Activated B cell treated with CpG ODN at 0.5 μM for 24 hours (primary cell): ENCODE measurements at regions of chr18 and their contacts with region 1.

Region 1: DNA sequence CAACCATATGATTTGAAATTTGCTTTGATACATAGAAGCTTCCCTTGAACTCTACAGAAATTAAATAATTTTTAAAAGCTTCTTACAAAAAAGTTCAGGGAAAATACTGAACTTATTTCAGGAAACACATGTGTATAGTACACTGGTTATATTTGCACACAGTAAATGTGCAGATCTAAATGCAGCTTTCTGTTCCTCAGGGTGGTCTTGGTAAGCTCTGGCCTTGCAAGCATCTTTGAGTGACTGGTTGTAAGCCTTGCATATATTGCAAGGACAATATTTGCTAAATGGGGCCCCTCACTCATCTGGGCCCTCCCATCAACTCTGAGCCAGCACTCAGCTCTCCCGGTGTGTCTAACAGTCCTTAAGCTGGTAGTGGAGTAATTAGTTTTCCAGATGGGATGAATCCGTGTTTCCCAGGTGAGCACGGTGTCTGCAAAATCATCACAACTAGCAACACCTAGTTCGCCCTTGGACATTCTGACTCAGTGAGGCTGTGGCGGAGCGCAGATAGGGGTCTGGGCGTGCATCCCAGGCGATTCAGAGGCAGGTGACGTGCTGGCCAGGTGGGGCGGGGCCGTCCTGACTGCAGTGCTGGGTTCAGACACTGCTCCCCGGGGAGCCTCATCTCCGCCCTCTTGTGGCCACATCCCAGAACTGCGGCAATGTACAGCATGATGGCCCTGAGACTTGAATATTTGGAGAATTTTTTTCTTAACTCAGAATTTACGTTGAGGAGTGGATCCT is 149.6 kb downstream of the MBP start:
- DNase-seq: peak; percentile 80
- ATAC-seq: peak; percentile 79
- H3K4me3 Mint-ChIP-seq: peak overlapping the region; percentile 35
- H3K27ac Mint-ChIP-seq: peak overlapping the region; percentile 69
- H3K4me1 Mint-ChIP-seq: peaks cover 56% of the 10 kb centered on the region
- H3K27me3 Mint-ChIP-seq: no peaks in the 10 kb centered on the region
- CTCF ChIP-seq: no peak

Region 2: DNA sequence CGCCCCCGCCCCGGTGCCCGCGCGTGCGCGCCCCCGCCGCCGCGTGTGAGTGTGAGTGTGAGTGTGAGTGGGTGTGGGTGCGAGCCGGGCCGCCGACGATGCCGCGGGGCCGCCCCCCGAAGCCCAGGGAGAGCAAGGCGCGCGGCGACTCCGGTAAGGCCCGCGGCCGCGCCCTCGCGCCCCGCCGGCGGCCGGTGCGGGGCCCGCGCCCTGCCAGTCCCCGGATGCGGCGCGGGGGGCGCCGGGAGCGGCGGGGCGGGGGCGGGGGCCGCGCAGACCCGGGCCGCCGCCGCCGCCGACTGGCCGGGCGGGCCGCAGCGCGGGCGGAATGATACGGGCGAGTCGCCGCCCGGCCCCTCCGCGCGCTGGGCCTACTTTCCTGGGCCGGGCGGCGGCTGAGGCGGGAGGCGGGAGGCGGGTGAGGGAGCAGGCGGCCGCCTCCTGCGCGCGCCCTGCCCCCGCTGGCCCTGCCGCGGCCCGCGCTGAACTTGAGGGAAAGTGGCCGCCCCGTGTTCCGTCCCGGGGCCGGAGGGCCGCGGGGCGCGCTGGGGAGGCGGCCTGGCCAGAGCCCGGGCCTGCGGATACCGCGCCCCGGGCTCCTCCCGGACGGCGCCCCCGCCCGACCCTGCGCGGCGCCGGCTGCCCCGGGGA is 160.4 kb before region 1 on chr18 and contains the start of gene ZNF236:
- CTCF ChIA-PET with region 1: no interaction called
- POLR2A ChIA-PET with region 1: interaction called, 4 read pairs
- intact Hi-C with region 1: loop called (anchors 2 kb)
- DNase-seq: peak; percentile 79
- ATAC-seq: peak; percentile 58
- H3K4me3 Mint-ChIP-seq: peak within 1 kb of the TSS; percentile 95
- H3K27ac Mint-ChIP-seq: peak within 1 kb of the TSS; percentile 97
- H3K4me1 Mint-ChIP-seq: peaks cover 64% of the 10 kb centered on the region
- H3K27me3 Mint-ChIP-seq: no peaks in the 10 kb centered on the region
- CTCF ChIP-seq: no peak
- total RNA-seq, gene ZNF236: 27.4 and 28.2 TPM in 2 replicates

Region 3: DNA sequence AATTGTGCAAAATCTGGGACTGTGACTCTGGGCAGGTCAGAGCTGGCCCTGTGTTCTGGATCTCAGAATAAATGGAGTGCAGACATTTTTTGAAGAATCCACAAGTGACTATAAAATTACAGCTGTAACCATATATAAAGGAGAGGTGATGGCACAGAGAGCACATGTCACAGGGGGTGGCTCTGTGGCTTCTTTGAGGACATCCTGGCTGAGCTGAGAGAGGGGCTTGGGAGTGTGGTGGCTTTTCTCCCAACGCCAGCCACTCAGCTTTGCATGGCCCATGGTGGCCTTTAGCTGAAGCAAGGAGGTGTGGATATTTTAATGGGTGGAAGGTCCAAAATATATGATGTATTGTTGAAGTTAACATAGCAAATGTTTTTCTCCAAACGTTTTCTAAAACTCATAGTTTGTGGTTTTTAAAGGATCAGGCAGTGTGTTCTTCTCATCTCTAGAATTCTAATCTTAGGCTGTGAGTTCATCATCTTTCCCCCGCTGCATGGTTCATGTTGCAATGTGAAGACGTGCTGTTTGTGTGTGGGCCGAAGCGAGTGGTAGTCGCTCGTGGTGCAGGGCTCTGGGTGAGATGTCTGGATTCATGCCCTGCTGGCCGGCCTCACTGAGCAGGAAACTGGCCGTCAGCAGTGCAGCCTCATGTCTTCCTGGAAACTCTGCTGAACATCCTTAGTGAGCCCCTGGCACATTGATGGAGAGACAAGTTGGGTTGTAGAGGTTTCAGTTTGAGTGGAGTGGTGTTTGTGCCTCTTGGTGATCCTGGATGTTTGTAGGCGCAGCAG is 50.8 kb before region 1 on chr18:
- CTCF ChIA-PET with region 1: interaction called, 21 read pairs
- POLR2A ChIA-PET with region 1: no interaction called
- intact Hi-C with region 1: no loop called
- DNase-seq: no peak
- ATAC-seq: no peak
- H3K4me3 Mint-ChIP-seq: no peak overlapping the region
- H3K27ac Mint-ChIP-seq: peak overlapping the region; percentile 10
- H3K4me1 Mint-ChIP-seq: peaks cover 3% of the 10 kb centered on the region
- H3K27me3 Mint-ChIP-seq: no peaks in the 10 kb centered on the region
- CTCF ChIP-seq: no peak

Region 4: DNA sequence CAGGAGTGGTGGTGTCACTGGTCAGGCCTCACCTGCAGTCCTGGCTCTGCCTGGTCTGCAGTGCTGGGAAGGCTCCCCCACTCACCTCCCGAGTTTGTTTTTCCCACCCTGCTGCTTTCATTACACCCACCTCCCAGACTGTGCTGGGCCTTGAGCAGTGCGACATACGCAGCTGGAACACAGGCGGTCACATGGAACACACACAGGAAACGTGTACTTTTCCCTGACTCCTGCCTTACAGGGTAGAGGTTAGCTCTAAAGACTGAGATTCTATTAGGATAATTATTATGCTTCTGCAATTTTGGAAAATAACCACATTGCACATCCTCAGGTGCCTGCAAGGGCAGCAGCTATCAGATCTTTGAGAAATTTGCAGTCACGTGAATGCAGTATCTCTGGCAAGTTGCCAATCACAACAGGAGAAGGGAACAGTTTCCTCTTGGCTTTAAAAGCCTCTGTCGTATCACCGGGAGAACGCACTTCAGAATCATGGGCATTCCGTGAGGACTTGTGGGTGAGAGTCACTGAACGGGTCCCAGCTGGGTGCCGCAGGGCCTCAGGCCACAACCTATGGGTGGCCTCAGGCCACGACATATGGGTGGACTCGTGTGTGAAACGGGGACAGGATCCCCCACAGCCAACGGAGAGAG is 24.2 kb before region 1 on chr18:
- CTCF ChIA-PET with region 1: interaction called, 94 read pairs
- POLR2A ChIA-PET with region 1: interaction called, 104 read pairs
- intact Hi-C with region 1: no loop called
- DNase-seq: no peak
- ATAC-seq: no peak
- H3K4me3 Mint-ChIP-seq: no peak overlapping the region
- H3K27ac Mint-ChIP-seq: no peak overlapping the region
- H3K4me1 Mint-ChIP-seq: peaks cover 2% of the 10 kb centered on the region
- H3K27me3 Mint-ChIP-seq: no peaks in the 10 kb centered on the region
- CTCF ChIP-seq: no peak

Region 5: DNA sequence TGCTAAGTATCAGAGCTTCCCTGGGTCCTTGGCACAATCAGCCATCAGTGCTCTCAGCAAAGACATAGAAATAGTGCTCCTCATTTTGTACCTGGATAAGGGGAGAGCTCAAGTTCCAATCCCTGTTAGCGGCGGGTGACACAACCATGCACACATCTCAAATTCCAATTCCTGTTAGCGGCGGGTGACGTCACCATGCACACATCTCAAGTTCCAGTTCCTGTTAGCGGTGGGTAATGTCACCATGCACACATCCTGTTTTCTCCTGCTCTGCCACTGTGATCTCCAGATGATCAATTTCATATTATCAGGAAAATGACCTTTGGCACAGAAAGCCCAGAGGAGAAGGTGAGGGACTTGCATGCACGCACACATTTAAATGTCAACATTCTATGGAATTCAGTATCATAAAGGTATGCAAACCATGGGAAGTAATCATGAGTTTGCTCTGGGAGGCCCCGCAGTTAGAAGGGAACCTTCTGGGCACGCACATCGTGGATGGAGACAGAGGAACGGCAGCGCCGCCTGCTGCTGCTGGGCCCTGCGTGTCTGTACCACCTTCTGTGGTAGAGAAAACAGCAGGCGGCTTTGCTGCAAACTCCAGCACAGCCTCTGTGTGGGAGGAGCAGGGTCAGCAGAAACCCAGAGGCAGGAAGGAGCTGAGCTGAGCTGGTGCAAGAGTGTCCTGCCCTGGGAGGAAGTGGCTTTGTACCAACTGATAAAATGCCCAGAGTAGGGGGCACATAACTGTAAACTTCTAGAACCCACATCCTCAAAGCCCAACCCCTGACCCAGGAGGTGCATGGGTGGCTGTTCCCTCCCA is 71.8 kb after region 1 on chr18:
- CTCF ChIA-PET with region 1: interaction called, 18 read pairs
- POLR2A ChIA-PET with region 1: interaction called, 3 read pairs
- intact Hi-C with region 1: loop called (anchors 1 kb)
- DNase-seq: peak; percentile 57
- ATAC-seq: peak; percentile 65
- H3K4me3 Mint-ChIP-seq: peak overlapping the region; percentile 67
- H3K27ac Mint-ChIP-seq: peak overlapping the region; percentile 91
- H3K4me1 Mint-ChIP-seq: peaks cover 65% of the 10 kb centered on the region
- H3K27me3 Mint-ChIP-seq: no peaks in the 10 kb centered on the region
- CTCF ChIP-seq: no peak

Region 6: DNA sequence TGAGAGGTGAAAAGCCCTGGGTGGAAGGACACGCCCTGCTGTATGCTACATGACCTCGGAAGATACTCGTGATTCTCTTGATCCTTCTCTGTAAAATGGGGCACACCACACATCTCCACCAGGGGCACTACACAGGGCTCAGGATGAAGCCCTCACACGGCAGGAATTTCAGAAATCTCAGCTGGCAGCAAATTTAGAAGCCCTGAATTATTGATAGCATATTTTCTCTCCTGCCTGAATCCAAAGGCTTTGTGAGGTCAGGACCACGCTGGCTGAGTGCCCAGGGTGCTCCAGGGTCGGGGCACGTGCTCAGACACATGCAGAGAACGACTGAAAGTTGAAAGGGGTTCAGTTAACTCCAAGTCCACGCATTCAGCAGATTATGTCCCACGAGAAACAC is 224.5 kb after region 1 on chr18:
- CTCF ChIA-PET with region 1: interaction called, 19 read pairs
- POLR2A ChIA-PET with region 1: interaction called, 3 read pairs
- intact Hi-C with region 1: loop called (anchors 1 kb)
- DNase-seq: no peak
- ATAC-seq: peak; percentile 87
- H3K4me3 Mint-ChIP-seq: peak overlapping the region; percentile 64
- H3K27ac Mint-ChIP-seq: peak overlapping the region; percentile 74
- H3K4me1 Mint-ChIP-seq: peaks cover 25% of the 10 kb centered on the region
- H3K27me3 Mint-ChIP-seq: peaks cover 2% of the 10 kb centered on the region
- CTCF ChIP-seq: no peak